ENCODE measurements at regions of chr19 and their contacts with region 1.

Region 1: DNA sequence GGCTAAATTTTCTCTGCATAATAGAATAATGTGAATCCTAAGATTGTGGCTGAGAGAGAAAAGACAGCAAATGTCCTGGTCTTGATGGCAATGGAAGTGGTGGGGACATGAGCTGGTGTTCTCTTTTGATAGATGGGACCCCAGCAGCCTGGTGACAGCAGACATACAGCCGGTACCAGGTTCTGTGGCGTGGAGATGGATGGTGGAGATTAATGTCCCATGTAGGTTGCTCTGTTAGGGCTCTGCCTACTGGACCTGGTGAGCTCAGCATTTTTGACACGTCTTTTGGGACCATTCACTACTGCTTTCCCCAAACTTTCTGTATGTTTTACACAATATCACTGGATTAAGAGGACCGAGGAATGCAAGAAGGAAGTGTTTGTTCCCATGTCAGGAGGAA is 8.2 kb upstream of the SIGLEC14 start:
- DNase-seq: no peak
- ATAC-seq: no peak
- H3K4me3 Mint-ChIP-seq: no peak overlapping the region
- H3K27ac Mint-ChIP-seq: no peak overlapping the region
- H3K4me1 Mint-ChIP-seq: peaks cover 5% of the 10 kb centered on the region
- H3K27me3 Mint-ChIP-seq: peaks cover 30% of the 10 kb centered on the region
- CTCF ChIP-seq: no peak

Region 2: GRCh38 chr19:51480590-51480989 is 174.2 kb before region 1 on chr19:
- CTCF ChIA-PET with region 1: interaction called, 82 read pairs
- POLR2A ChIA-PET with region 1: no interaction called
- intact Hi-C with region 1: loop called (anchors 5 kb)
- DNase-seq: peak; percentile 23
- ATAC-seq: no peak
- H3K4me3 Mint-ChIP-seq: no peak overlapping the region
- H3K27ac Mint-ChIP-seq: no peak overlapping the region
- H3K4me1 Mint-ChIP-seq: peaks cover 27% of the 10 kb centered on the region
- H3K27me3 Mint-ChIP-seq: peaks cover 16% of the 10 kb centered on the region
- CTCF ChIP-seq: no peak